Activated CD4-positive, alpha-beta T cell treated with anti-CD3 and anti-CD28 coated beads for 36 hours (primary cell): ENCODE measurements at regions of chr1 and their contacts with region 1.

Region 1: DNA sequence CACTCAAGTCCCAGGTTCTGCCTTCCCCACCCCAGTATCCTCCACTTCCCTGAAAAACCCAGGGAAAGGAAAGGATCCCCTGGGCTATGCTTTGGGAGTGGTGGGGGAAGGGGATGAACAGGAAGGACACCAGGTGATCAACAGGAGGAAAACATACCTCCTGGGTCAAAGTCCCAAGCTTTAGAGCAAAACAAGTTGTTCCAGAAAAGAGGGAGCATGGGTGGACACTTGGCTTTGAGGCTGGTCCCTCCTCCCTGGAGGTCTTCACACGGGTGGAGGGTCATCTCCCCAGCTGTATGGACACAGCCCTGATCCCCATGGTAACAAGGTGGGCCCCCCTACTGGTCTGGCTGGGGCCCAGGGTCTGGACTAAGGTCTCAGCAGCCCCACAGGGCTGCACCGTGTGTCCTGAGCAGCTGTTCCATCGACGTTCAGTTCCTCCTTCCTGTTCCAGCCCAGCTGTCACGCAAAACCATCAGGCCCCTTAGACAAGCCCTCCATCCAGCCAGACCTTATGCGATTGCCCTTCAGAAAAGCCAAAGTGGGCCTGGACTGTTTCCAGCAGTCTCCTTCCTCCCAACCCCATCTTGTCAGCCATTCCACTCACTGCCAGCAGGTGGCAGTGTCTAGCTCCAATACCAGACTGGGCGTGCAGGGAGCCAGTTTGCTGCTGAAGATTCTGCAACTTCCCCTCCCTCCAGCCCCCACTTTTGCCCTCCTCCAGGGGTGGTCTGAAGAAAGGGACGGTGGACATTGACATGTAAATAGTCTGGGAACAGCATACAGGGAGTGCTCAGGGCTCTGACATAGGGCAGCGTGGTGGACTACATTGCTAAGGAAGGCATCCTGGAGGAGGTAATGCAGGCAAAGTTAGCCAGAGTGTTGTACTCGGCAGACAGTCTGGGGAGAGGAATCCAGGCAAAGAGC is 2.9 kb upstream of the PDZK1IP1 start:
- DNase-seq: peak; percentile 77
- ATAC-seq: peak; percentile 89
- H3K4me3 Mint-ChIP-seq: no peak overlapping the region
- H3K27ac Mint-ChIP-seq: peak overlapping the region; percentile 61
- H3K4me1 Mint-ChIP-seq: no peaks in the 10 kb centered on the region
- H3K27me3 Mint-ChIP-seq: peaks cover 5% of the 10 kb centered on the region

Region 2: GRCh38 chr1:47179017-47179987 is 13.4 kb before region 1 on chr1:
- CTCF ChIA-PET with region 1: interaction called, 121 read pairs
- POLR2A ChIA-PET with region 1: no interaction called
- intact Hi-C with region 1: no loop called
- DNase-seq: peak; percentile 91
- ATAC-seq: peak; percentile 90
- H3K4me3 Mint-ChIP-seq: peak overlapping the region; percentile 57
- H3K27ac Mint-ChIP-seq: no peak overlapping the region
- H3K4me1 Mint-ChIP-seq: peaks cover 8% of the 10 kb centered on the region
- H3K27me3 Mint-ChIP-seq: peaks cover 22% of the 10 kb centered on the region

Region 3: DNA sequence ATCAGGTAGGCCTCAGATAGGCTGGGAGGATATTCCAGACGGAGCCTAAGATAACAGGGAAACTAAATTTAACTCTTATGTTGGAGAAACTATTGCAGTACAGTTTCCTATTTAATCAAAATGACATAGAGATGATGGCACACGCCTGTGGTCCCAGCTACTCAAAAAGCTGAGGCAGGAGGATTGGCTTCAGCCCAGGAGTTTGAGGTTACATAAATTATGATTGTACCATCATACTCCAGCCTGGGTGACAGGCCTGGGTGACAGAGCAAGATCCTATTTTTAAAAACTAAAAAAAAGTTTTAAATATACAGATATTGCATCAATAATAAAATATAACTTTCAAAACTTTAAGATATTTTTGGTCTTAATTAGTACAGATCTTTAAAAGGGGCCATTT is 64.5 kb after region 1 on chr1:
- CTCF ChIA-PET with region 1: interaction called, 47 read pairs
- POLR2A ChIA-PET with region 1: no interaction called
- intact Hi-C with region 1: loop called (anchors 1 to 2 kb)
- DNase-seq: no peak
- ATAC-seq: no peak
- H3K4me3 Mint-ChIP-seq: no peak overlapping the region
- H3K27ac Mint-ChIP-seq: no peak overlapping the region
- H3K4me1 Mint-ChIP-seq: no peaks in the 10 kb centered on the region
- H3K27me3 Mint-ChIP-seq: no peaks in the 10 kb centered on the region

Region 4: DNA sequence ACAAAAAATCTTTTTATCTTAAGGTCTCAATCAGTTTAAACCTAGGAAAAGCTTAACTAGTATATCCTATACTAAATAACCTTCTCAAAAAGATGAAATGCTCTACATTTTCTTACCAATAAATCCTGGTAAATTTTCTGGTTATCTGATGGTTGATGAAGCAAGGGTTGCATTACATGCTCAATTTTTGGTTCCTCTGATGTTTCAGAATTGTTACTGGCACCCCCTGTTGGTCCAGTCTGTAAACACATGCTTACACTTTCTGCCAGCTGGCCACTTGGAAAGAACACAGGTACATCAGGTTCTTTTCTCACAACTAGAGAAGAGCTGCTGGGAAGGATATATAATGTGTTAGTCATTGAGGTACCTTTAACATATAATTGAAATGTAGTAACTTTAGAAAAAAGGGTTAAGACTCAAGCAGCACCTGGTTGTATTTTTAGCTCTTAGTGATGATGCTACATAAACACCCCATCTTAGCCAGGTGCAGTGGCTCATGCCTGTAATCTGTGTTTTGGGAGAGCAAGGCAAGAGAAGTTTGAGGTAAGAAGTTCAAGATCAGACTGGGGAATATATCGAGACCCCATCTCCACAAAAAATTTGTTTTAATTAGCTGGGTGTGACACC is 70.2 kb after region 1 on chr1:
- CTCF ChIA-PET with region 1: interaction called, 47 read pairs
- POLR2A ChIA-PET with region 1: no interaction called
- intact Hi-C with region 1: loop called (anchors 1 to 2 kb)
- DNase-seq: peak; percentile 56
- ATAC-seq: no peak
- H3K4me3 Mint-ChIP-seq: no peak overlapping the region
- H3K27ac Mint-ChIP-seq: no peak overlapping the region
- H3K4me1 Mint-ChIP-seq: no peaks in the 10 kb centered on the region
- H3K27me3 Mint-ChIP-seq: no peaks in the 10 kb centered on the region

Region 5: GRCh38 chr1:47298025-47298699 is 105.4 kb after region 1 on chr1:
- CTCF ChIA-PET with region 1: no interaction called
- POLR2A ChIA-PET with region 1: no interaction called
- intact Hi-C with region 1: no loop called
- DNase-seq: no peak
- ATAC-seq: no peak
- H3K4me3 Mint-ChIP-seq: no peak overlapping the region
- H3K27ac Mint-ChIP-seq: no peak overlapping the region
- H3K4me1 Mint-ChIP-seq: no peaks in the 10 kb centered on the region
- H3K27me3 Mint-ChIP-seq: no peaks in the 10 kb centered on the region

Region 6: DNA sequence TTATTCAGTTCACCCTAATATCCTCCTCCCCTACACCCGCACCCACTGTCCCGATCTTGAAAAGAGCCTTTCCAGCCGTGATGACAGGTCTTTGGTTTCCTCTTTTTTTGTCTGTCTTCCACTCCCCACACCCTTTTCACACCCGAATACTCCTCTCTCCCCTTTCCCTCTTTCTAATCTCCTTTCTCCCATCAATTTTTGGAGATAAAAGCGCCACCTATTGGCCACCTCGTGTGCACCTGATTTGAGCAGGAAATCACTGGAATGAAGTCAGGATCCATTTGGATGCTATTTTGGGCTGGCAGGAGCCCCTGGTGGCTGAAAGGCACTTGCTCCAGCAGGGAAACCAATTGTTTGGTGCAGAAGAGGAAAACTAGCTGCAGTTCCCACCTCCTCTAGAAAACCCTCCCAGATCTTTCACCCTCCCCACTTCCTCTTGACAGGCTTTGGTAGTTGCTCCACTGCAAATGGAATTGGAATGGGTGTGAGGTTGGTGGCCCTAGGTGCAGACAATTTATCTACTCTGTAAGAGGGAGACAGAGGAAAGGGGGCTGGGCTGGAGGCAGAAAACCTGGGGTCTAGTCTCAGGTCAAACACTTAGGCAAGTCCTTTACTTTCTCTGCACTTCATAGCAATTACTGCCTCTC is 231.7 kb after region 1 on chr1:
- CTCF ChIA-PET with region 1: no interaction called
- POLR2A ChIA-PET with region 1: no interaction called
- intact Hi-C with region 1: loop called (anchors 1 to 5 kb)
- DNase-seq: peak; percentile 30
- ATAC-seq: no peak
- H3K4me3 Mint-ChIP-seq: no peak overlapping the region
- H3K27ac Mint-ChIP-seq: no peak overlapping the region
- H3K4me1 Mint-ChIP-seq: no peaks in the 10 kb centered on the region
- H3K27me3 Mint-ChIP-seq: peaks cover 14% of the 10 kb centered on the region